ENCODE measurements at regions of chr13 and their contacts with region 1.

Region 1: DNA sequence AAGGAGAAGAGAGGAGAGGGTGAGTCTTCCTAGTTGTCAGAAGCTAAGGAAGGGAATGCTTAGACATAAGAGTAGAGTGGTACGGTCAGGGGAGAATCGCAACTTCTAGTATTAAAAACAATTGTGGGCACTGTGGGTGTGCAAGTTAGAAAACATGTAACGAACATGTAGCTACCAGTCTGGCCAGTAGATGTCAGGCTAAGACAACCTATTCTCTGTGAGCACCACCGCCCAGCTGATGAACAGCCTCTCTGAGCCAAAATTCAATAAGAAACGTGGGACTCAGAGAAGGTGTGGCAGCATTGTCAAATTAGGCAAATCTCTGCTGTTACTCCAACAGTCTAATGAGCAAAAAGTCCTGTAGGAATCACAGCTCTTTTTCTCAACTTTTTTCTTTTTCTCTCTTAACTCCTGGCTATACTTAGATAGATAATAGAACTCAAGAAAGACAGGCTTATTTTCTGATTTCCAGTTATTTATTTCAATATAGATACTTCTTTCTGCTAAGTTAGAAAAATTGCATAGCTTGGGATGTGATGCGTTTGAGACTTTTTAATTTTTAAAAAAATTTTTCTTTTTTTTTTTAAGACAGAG is 186.2 kb downstream of the USP12 start:
- DNase-seq: peak; percentile 86
- H3K4me3 Mint-ChIP-seq: no peak overlapping the region
- H3K27ac Mint-ChIP-seq: no peak overlapping the region
- H3K4me1 Mint-ChIP-seq: no peaks in the 10 kb centered on the region
- H3K27me3 Mint-ChIP-seq: peaks cover 5% of the 10 kb centered on the region

Region 2: DNA sequence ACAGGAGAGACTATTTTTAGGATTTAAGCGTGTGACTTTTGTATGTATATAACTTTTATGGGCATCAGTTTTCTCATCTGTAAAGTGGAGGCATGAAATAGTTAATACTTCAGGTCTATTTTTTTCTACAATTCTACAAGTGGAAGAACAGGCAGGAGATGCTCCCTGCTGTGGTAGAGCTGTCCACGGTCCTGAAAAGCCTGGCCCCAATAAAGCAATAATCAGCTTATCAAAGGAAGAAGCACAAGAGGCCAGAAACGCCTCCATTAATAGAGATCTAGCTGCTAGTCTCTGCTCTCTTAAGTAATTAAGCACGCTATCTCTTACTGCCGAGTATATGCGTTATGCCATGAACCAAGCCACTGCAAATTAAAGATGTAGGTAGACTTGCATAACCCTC is 455.9 kb before region 1 on chr13:
- CTCF ChIA-PET with region 1: no interaction called
- intact Hi-C with region 1: no loop called
- DNase-seq: peak; percentile 52
- H3K4me3 Mint-ChIP-seq: no peak overlapping the region
- H3K27ac Mint-ChIP-seq: no peak overlapping the region
- H3K4me1 Mint-ChIP-seq: no peaks in the 10 kb centered on the region
- H3K27me3 Mint-ChIP-seq: peaks cover 17% of the 10 kb centered on the region

Region 3: DNA sequence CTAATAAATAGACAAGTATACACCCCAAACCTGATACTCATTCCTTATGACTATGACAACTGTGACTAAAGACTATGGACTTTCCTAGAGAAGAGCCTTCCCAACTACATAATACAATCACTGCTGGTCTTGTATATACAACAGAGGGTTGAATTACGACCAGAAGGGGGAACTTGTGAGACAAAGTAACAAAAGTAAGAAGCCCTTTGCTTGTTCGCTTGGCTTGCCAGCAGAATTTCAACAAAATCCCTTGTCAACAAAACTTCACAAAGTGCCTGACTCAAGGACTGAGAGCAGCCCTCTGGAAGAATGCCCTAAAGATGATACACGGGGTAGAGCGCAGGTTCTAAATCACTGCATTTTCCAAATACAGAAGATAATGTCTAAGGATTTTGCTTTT is 328.5 kb before region 1 on chr13:
- CTCF ChIA-PET with region 1: no interaction called
- intact Hi-C with region 1: no loop called
- DNase-seq: no peak
- H3K4me3 Mint-ChIP-seq: no peak overlapping the region
- H3K27ac Mint-ChIP-seq: no peak overlapping the region
- H3K4me1 Mint-ChIP-seq: no peaks in the 10 kb centered on the region
- H3K27me3 Mint-ChIP-seq: peaks cover 10% of the 10 kb centered on the region

Region 4: GRCh38 chr13:26971990-26972887 is 13.1 kb before region 1 on chr13:
- CTCF ChIA-PET with region 1: interaction called, 11 read pairs
- intact Hi-C with region 1: no loop called
- DNase-seq: peak; percentile 65
- H3K4me3 Mint-ChIP-seq: no peak overlapping the region
- H3K27ac Mint-ChIP-seq: peak overlapping the region; percentile 1
- H3K4me1 Mint-ChIP-seq: no peaks in the 10 kb centered on the region
- H3K27me3 Mint-ChIP-seq: no peaks in the 10 kb centered on the region

Region 5: DNA sequence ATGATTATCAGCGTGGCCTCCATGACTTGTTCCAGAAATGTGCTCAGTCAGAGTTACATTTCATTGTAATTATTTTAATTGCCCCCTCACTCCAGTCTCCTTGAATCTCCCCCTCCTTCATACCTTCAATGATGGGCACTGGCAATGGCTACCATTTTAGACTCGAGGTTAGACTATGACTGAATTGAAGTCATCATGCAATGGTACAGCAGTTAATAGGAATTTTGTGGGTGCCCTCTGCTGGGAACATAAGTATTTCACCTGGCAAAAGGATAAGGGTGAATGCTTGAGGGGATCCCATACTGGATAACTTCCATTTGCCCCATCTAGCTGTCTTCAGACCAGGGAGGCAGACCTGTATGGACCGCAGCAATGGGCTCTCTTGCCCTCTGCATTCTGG is 218.5 kb after region 1 on chr13:
- CTCF ChIA-PET with region 1: interaction called, 6 read pairs
- intact Hi-C with region 1: loop called (anchors 1 kb)
- DNase-seq: peak; percentile 28
- H3K4me3 Mint-ChIP-seq: no peak overlapping the region
- H3K27ac Mint-ChIP-seq: no peak overlapping the region
- H3K4me1 Mint-ChIP-seq: no peaks in the 10 kb centered on the region
- H3K27me3 Mint-ChIP-seq: no peaks in the 10 kb centered on the region

Region 6: DNA sequence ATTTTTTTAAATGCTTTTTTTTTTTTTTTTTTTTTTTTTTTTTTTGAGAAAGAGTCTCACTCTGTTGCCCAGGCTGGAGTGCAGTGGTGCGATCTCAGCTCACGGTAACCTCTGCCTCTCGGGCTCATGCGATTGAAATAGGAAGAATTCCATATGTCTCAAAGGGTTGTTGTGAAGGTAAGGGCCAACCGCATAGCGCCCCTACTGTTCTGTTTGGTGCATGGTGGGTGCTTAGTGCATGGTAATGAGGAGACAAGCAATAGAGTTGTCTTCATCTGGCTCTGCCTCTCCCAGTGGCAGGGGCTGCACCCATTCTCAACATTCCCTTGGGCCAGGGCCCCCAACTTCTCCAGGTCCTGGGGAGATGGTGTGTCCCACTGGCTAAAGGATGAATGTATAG is 353.9 kb after region 1 on chr13:
- CTCF ChIA-PET with region 1: interaction called, 5 read pairs
- intact Hi-C with region 1: loop called (anchors 1 kb)
- DNase-seq: peak; percentile 65
- H3K4me3 Mint-ChIP-seq: no peak overlapping the region
- H3K27ac Mint-ChIP-seq: no peak overlapping the region
- H3K4me1 Mint-ChIP-seq: peaks cover 2% of the 10 kb centered on the region
- H3K27me3 Mint-ChIP-seq: no peaks in the 10 kb centered on the region

Region 7: GRCh38 chr13:27977476-27978300 is 992.3 kb after region 1 on chr13:
- CTCF ChIA-PET with region 1: no interaction called
- intact Hi-C with region 1: loop called (anchors 10 kb)
- DNase-seq: no peak
- H3K4me3 Mint-ChIP-seq: peak overlapping the region; percentile 30
- H3K27ac Mint-ChIP-seq: no peak overlapping the region
- H3K4me1 Mint-ChIP-seq: peaks cover 27% of the 10 kb centered on the region
- H3K27me3 Mint-ChIP-seq: peaks cover 76% of the 10 kb centered on the region

Measured in activated naive CD4-positive, alpha-beta T cell treated with anti-CD3 and anti-CD28 coated beads for 36 hours (primary cell).